Ovary (tissue), 10 donors: ENCODE measurements at regions of chr1 and their contacts with region 1.

Region 1: DNA sequence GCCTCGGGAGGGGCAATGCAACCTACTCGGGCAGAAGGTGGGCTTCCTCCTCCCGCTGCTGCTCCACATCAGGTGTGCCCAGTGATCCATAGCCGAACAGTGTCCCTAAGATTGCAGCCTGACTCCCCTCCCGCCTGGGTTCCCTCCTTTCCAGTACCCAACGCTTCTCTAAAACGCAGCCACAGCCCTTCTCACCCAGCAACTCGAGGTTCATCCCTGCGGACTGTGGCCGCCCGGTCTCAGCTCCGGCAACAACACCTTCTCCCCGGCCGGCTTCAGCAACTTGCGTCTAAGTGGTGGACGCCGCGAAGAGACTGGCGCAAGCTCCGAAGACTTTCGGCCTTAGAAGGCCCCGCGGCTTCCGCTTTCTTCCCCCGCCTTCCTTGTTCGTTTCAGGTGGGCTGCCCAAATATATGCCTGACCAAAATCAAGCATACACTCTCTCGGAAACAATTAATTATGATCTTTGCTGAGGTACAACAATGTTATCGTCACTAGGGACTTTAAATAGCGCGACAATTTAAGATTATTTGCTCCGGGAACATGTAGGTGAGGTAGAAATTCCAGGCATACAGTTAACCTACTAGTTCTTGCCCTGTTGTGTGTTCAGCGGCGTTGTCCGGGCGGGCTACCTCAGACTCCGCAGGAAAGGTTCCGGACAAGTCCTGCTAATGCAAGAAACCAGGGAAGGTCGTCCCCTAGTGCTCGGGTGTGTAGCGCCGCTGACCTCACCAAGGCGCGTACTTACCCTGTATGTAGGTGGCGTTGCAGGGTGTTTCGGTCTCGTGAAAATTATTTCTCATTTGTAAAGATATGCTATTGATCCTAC is at the start of gene RBBP5:
- DNase-seq: peak; percentile 88 to 95 (median 94)
- H3K4me3 ChIP-seq: peak within 1 kb of the TSS; percentile 83
- H3K27ac ChIP-seq: peak within 1 kb of the TSS; percentile 59 to 93
- H3K4me1 ChIP-seq: peaks cover 9% of the 10 kb centered on the region
- H3K27me3 ChIP-seq: no peaks in the 10 kb centered on the region
- CTCF ChIP-seq: peak in 2 of 3 donors; percentile 29 to 69
- EP300 ChIP-seq: no peak
- POLR2A ChIP-seq: peak; percentile 65
- total RNA-seq, gene RBBP5: 10.0 to 19.1 (median 15.1) TPM

Region 2: DNA sequence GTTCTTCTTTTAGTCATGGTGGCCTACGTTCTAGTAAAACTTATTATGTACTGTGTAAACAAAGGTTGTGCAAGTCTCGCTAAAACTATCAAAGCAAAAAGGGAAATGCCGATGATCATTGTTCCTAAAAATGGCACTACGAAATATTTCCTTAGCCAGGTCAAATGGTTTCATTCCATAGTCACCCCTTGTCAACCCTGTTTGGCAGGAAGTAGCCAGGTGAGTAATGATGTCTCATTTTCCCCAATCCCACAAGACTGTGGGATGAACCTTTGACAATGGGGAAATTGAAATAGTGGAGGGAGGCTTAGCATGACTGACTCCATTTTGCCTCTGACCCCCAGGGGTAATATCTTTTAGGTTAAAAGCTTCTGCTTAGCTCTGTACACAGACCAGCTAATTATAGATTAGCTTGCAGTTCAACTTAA is 950.1 kb before region 1 on chr1:
- intact Hi-C with region 1: no loop called
- DNase-seq: no peak
- H3K4me3 ChIP-seq: no peak overlapping the region
- H3K27ac ChIP-seq: no peak overlapping the region
- H3K4me1 ChIP-seq: no peaks in the 10 kb centered on the region
- H3K27me3 ChIP-seq: no peaks in the 10 kb centered on the region
- CTCF ChIP-seq: no peak
- EP300 ChIP-seq: no peak
- POLR2A ChIP-seq: no peak

Region 3: DNA sequence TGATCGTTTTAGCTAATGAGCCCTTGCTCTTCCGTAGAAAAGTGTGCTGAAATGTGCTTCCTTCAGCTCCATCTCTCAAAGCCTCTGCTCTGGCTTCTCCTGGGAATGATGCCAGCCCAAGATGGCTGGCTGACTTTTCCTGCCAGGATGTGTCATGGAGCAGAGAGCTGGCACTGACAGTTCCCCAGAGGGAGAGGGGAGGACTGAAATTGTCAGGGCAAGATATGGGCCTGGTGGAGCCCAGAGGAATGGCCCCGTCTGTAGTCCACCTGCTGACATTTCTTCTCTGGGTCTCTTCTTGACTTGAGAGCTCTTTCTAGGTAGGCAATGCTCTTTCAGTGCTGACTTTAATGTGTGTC is 736.9 kb before region 1 on chr1:
- intact Hi-C with region 1: no loop called
- DNase-seq: no peak
- H3K4me3 ChIP-seq: no peak overlapping the region
- H3K27ac ChIP-seq: no peak overlapping the region
- H3K4me1 ChIP-seq: no peaks in the 10 kb centered on the region
- H3K27me3 ChIP-seq: no peaks in the 10 kb centered on the region
- CTCF ChIP-seq: no peak
- EP300 ChIP-seq: no peak
- POLR2A ChIP-seq: no peak

Region 4: DNA sequence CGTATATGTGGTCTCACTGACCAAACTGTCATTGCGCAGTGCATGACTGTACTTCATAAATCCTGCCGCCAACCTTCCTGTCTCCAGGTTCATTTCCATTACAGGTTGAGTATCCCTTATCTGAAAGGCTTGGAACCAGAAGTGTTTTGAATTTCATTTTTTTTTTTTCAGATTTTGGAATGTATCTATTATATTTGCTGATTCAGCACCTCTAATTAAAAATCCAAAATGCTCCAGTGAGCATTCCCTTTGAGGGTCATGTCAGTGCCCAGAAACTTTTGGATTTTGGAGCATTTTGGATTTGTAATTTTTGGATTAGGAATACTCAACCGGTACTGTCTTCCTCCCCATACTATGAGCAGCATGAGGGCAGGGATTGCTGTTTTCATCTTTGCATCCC is 30.6 kb after region 1 on chr1:
- intact Hi-C with region 1: loop called in 1 of 4 experiments (anchors 2 kb)
- DNase-seq: no peak
- H3K4me3 ChIP-seq: no peak overlapping the region
- H3K27ac ChIP-seq: no peak overlapping the region
- H3K4me1 ChIP-seq: no peaks in the 10 kb centered on the region
- H3K27me3 ChIP-seq: no peaks in the 10 kb centered on the region
- CTCF ChIP-seq: no peak
- EP300 ChIP-seq: no peak
- POLR2A ChIP-seq: no peak